H1 (cell line): ENCODE measurements at regions of chr9 and their contacts with region 1.

Region 1: GRCh38 chr9:113275157-113276131 is at the starts of genes CDC26 and PRPF4:
- DNase-seq: peak; percentile 89 to 92
- H3K4me3 ChIP-seq: peak within 1 kb of the TSS; percentile 68 to 98 (median 90)
- H3K27ac ChIP-seq: peak within 1 kb of the TSS; percentile 93
- H3K4me1 ChIP-seq: peaks cover 0 to 4% (median 0%) of the 10 kb centered on the region in 4 experiments; a peak in 1 of 7 replicates
- H3K27me3 ChIP-seq: no peaks in the 10 kb centered on the region
- CTCF ChIP-seq: no peak
- EP300 ChIP-seq: no peak
- POLR2A ChIP-seq: peak; percentile 93 to 96
- RAD21 ChIP-seq: no peak
- total RNA-seq, gene CDC26: 41.9 and 42.8 TPM in 2 replicates
- total RNA-seq, gene PRPF4: 33.4 and 36.8 TPM in 2 replicates

Region 2: DNA sequence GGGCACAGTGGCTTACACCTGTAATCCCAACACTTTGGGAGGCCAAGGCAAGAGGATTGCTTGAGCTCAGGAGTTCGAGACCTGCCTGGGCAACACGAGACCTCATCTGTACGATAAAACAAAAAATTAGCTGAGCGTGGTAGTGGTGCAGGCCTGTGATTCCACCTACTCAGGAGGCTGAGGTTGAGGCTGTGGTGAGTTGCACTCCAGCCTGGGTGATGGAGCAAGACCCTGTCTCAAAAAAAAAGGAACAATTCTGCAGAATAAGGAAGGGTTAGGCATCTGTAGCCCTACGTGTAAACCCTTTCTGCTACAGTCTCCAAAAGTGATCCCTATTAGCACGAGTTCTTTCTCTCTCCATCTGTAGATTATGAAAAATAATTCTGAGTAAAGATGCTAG is 20.0 kb before region 1 on chr9:
- CTCF ChIA-PET with region 1: interaction called, 17 read pairs
- POLR2A ChIA-PET with region 1: interaction called, 9 read pairs
- DNase-seq: no peak
- H3K4me3 ChIP-seq: no peak overlapping the region
- H3K27ac ChIP-seq: no peak overlapping the region
- H3K4me1 ChIP-seq: no peaks in the 10 kb centered on the region
- H3K27me3 ChIP-seq: no peaks in the 10 kb centered on the region
- CTCF ChIP-seq: no peak
- EP300 ChIP-seq: no peak
- POLR2A ChIP-seq: no peak
- RAD21 ChIP-seq: no peak

Region 3: DNA sequence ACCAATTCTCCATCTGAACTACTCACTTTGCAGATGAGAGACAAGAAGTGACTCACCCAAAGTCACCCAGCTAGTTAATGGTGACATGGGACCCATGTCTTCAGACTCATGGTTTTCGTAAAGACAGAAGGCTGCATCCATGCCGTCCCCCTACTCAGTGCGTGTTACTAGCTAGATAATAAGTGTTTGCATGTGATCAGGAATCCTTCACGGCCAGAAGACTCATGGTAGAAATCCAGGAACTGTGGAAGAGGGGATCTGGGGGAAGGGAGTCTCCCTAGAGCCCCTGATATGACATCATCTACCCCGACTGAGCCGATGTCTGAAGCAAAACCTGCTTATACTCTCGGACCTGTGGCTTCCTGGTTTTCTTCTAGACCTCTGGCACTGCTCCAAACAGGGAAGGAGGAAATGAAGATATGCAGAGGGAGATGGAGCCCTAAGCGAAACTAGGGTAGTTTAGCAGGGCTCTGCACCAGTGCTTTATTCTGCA is 24.4 kb after region 1 on chr9:
- CTCF ChIA-PET with region 1: interaction called, 12 read pairs
- POLR2A ChIA-PET with region 1: interaction called, 6 read pairs
- DNase-seq: no peak
- H3K4me3 ChIP-seq: no peak overlapping the region
- H3K27ac ChIP-seq: no peak overlapping the region
- H3K4me1 ChIP-seq: 0 out of 7 replicates have a peak, but pooled peaks cover 0 to 4% (median 0%) of the 10 kb centered on the region in 4 experiments
- H3K27me3 ChIP-seq: peaks cover 0 to 2% (median 0%) of the 10 kb centered on the region in 4 experiments; a peak in 1 of 7 replicates
- CTCF ChIP-seq: no peak
- EP300 ChIP-seq: no peak
- POLR2A ChIP-seq: no peak
- RAD21 ChIP-seq: no peak

Region 4: DNA sequence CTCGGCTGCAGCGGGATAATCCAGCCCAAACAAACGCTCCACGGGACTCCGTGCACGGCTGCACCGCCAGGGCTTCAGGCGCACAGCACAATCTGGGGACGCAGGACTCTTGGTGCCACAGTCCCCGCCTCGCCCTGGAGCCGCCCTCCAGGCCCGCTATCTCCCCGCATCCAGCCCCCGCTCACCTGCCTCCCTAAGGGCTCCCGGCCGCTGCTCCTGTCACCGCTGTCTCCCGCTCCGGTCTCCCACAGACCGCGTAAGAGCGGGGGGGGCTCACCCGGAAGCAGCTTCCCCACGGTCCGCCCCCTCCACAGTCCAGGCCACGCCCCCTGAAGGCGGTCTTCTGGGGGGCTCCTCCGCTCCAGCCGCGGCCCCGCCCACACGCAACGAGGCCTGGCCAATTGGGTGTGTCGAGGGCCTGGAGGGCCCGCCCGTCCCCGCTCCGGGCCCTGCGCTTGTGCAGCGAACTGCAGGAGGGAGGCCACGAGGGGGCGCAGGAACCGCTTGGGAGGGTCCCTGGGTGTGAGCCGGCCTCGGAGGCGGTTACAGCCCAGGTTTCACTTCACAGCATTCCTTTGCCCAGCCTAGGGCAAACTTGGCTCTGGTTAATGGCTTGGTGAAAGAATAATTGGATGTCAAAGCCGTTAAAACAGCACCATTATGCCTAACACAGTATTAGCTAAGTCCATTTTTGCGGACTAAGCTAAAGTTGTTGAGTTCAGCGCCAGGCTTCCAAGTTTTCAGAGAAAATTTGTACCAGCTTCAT is 125.8 kb after region 1 on chr9 and contains the start of gene ALAD:
- CTCF ChIA-PET with region 1: interaction called, 17 read pairs
- POLR2A ChIA-PET with region 1: interaction called, 6 read pairs
- DNase-seq: peak; percentile 93 to 100
- H3K4me3 ChIP-seq: peak within 1 kb of the TSS; percentile 70 to 95 (median 90)
- H3K27ac ChIP-seq: no peak within 1 kb of the TSS
- H3K4me1 ChIP-seq: peaks cover 0 to 2% (median 0%) of the 10 kb centered on the region in 4 experiments; a peak in 2 of 7 replicates
- H3K27me3 ChIP-seq: no peaks in the 10 kb centered on the region
- CTCF ChIP-seq: peak; percentile 81 to 93 (median 92)
- EP300 ChIP-seq: peak in 1 of 2 experiments; percentile 64; a peak in 1 of 3 replicates
- POLR2A ChIP-seq: no peak
- RAD21 ChIP-seq: peak; percentile 70 to 79
- total RNA-seq, gene ALAD: 13.0 and 15.3 TPM in 2 replicates

Region 5: GRCh38 chr9:113446323-113446740 is 170.9 kb after region 1 on chr9:
- CTCF ChIA-PET with region 1: no interaction called
- POLR2A ChIA-PET with region 1: no interaction called
- DNase-seq: no peak
- H3K4me3 ChIP-seq: no peak overlapping the region
- H3K27ac ChIP-seq: no peak overlapping the region
- H3K4me1 ChIP-seq: no peaks in the 10 kb centered on the region
- H3K27me3 ChIP-seq: no peaks in the 10 kb centered on the region
- CTCF ChIP-seq: peak in 2 of 3 experiments; percentile 47; a peak in 2 of 4 replicates
- EP300 ChIP-seq: no peak
- POLR2A ChIP-seq: no peak
- RAD21 ChIP-seq: peak; percentile 86 to 88